ENCODE measurements at regions of chr11 and their contacts with region 1.

Region 1: DNA sequence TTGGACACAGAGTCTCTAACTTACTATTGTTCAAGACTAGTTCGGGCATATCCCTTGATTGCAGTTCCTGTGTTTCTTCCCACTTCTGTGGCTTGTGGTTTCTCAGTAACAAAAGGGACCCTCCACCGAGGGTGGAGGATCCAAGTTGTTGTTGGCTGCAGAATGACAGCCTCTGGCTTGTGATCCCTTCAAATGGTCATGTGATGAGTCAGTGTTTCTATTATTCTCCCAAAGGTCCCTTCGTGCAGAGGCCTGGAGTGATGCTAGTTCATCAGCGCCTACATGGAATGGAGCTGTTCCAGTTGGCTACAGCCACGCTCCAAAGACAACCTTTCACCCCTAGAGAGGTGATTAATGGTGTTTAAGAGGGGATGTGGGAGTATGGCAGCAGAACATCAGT is 2.6 kb upstream of the VWCE start:
- DNase-seq: peak in 1 of 2 experiments; percentile 55
- H3K4me3 ChIP-seq: no peak overlapping the region
- H3K27ac ChIP-seq: no peak overlapping the region
- H3K4me1 ChIP-seq: no peaks in the 10 kb centered on the region
- H3K27me3 ChIP-seq: peaks cover 14% of the 10 kb centered on the region; the same call in 1 of the 2 replicates
- CTCF ChIP-seq: no peak

Region 2: DNA sequence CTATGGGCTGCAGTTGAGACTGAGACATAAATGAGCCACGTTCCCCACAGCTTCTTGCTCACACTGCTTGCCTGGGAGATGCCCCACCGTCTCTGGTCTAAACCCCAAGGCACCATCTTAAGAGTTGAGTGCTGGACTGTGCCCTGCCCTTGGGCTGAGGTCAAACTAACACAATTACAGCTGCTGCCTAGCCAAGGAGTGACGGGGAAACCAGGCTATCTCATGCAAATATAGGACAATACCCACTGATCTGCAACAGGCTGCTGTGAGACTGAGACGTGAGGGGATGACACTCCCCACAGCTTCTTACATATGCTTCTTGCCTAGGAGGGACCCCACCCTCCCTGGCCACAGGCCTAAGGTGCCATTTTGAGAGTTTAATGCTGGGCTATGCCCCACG is 606.1 kb before region 1 on chr11:
- CTCF ChIA-PET with region 1: no interaction called
- POLR2A ChIA-PET with region 1: no interaction called
- intact Hi-C with region 1: no loop called
- DNase-seq: no peak
- H3K4me3 ChIP-seq: no peak overlapping the region
- H3K27ac ChIP-seq: no peak overlapping the region
- H3K4me1 ChIP-seq: no peaks in the 10 kb centered on the region
- H3K27me3 ChIP-seq: peaks cover 41% of the 10 kb centered on the region
- CTCF ChIP-seq: no peak

Region 3: DNA sequence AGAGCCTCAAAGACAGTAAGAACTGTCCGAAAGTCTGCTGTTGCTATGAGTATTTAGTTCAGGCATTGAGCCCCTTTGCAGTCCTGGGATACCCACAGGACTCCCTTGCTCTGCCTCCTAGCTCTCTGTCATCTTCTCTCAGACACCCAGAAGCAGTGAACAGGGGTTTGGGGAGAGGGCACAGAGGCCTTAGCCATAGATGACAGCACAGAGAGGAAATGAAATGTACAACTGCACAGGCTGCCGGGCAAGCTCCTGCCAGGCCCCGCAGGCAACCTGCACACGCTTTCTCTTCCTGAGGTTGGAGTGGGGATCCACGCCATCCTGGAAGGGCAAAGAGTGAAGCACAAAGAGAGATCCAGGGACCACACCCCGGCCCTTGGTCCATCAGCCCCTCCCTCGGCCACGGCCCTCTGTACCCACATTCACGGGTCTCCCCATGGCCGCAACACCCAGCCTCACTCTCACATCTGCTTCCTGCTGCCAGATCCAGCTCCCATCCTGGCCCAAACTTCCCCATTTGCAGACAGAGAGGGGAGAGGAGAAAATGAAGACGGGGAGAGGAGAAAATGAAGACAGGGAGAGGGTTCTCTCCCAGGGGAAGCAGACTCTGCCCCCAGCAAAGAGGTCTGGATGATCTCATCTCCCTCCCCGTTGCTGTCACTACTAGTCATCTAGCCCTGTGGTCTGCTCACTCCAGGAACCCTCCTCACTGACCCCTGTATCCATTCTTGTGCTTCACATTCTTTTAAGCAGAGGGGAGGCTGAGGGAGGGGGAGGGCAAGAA is 285.6 kb before region 1 on chr11:
- CTCF ChIA-PET with region 1: no interaction called
- POLR2A ChIA-PET with region 1: no interaction called
- intact Hi-C with region 1: no loop called
- DNase-seq: no peak
- H3K4me3 ChIP-seq: no peak overlapping the region
- H3K27ac ChIP-seq: no peak overlapping the region
- H3K4me1 ChIP-seq: no peaks in the 10 kb centered on the region
- H3K27me3 ChIP-seq: peaks cover 55% of the 10 kb centered on the region
- CTCF ChIP-seq: no peak

Region 4: DNA sequence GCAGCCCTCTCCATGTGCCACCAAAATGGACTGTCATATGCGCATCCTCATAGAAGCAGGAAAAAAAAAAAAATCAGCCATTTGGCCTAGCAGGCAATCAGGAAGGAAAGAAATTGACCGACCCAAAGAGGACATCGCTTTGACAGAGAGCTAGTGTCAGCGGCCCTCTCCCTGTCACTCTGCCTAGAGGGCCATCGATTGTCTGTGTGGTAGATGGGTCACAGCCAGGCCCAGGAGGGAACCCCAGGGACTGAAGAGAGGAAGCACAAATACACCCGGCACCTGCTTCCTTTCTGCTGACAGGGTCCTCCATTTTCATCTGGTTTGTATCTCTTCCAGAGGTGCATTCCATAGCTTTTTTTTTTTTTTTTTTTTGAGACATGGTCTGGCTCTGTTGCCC is 158.4 kb before region 1 on chr11:
- CTCF ChIA-PET with region 1: no interaction called
- POLR2A ChIA-PET with region 1: interaction called, 11 read pairs
- intact Hi-C with region 1: no loop called
- DNase-seq: no peak
- H3K4me3 ChIP-seq: no peak overlapping the region
- H3K27ac ChIP-seq: no peak overlapping the region
- H3K4me1 ChIP-seq: no peaks in the 10 kb centered on the region
- H3K27me3 ChIP-seq: no peaks in the 10 kb centered on the region
- CTCF ChIP-seq: no peak

Region 5: DNA sequence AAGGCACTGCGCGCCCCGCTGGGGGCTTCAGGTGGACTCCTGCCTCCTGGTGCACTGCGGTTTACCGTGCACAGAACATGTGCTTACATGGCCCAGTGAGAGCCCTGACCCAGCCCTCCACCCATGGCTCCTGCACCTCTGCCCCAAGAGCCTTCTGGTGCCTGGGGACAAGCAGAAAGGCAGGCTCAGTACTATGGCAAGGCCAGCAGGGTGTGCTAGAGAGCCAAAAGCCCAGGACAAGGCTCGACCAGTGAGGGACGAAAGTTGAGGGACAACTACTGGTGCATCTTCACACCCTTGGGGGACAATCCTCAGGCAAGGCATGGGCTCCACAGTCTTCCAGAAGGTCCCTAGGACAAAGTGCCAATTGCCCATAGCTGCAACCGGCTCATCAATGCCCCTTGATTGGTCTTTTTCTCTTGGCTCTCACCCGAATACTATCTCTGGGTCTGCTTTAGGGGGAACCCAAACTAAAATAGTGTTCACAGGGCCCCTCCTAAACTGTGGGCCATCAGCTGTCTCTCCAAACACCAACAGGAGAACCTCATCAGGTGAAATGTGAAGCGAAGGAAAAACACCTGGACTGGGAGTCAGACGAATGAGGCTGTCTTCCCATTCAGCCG is 43.2 kb before region 1 on chr11:
- CTCF ChIA-PET with region 1: no interaction called
- POLR2A ChIA-PET with region 1: no interaction called
- intact Hi-C with region 1: no loop called
- DNase-seq: peak in 1 of 2 experiments; percentile 65
- H3K4me3 ChIP-seq: no peak overlapping the region
- H3K27ac ChIP-seq: no peak overlapping the region
- H3K4me1 ChIP-seq: no peaks in the 10 kb centered on the region
- H3K27me3 ChIP-seq: peaks cover 81% of the 10 kb centered on the region
- CTCF ChIP-seq: peak; percentile 84

Region 6: GRCh38 chr11:61266602-61267001 is 31.1 kb before region 1 on chr11:
- CTCF ChIA-PET with region 1: interaction called, 12 read pairs
- POLR2A ChIA-PET with region 1: no interaction called
- intact Hi-C with region 1: no loop called
- DNase-seq: peak; percentile 36 to 38
- H3K4me3 ChIP-seq: no peak overlapping the region
- H3K27ac ChIP-seq: no peak overlapping the region
- H3K4me1 ChIP-seq: 0 out of 2 replicates have a peak, but pooled peaks cover 5% of the 10 kb centered on the region
- H3K27me3 ChIP-seq: peaks cover 14% of the 10 kb centered on the region
- CTCF ChIP-seq: no peak